Vagina (tissue), 2 donors: ENCODE measurements at regions of chr4 and their contacts with region 1.

Region 1: DNA sequence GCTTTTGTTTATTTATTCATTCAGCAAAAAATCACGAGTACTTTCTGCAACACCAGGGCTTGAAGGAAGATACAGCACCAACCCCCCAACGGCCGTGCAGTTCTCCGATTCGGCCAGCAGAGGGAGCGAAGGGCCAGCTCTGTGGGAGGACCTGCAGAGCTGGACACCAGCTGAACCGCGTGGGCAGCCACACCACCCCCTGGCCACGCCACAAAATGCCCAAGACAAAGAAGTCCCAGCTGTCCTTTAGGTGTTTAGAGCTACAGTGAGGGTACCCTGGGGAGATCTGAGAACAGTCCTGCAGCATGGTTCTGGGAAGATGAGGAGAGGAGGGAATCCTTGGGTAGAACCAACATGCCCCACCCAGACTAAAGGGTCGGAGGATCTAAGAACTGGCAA is 83.1 kb downstream of the RELL1 start:
- DNase-seq: no peak
- H3K4me3 ChIP-seq: no peak overlapping the region
- H3K27ac ChIP-seq: no peak overlapping the region
- H3K4me1 ChIP-seq: peaks cover 4% of the 10 kb centered on the region
- H3K27me3 ChIP-seq: no peaks in the 10 kb centered on the region
- CTCF ChIP-seq: peak; percentile 96 to 98 (median 97)
- POLR2A ChIP-seq: no peak

Region 2: GRCh38 chr4:37793562-37793961 is 190.5 kb after region 1 on chr4:
- intact Hi-C with region 1: loop called (anchors 5 kb)
- DNase-seq: no peak
- H3K4me3 ChIP-seq: no peak overlapping the region
- H3K27ac ChIP-seq: no peak overlapping the region
- H3K4me1 ChIP-seq: no peaks in the 10 kb centered on the region
- H3K27me3 ChIP-seq: no peaks in the 10 kb centered on the region
- CTCF ChIP-seq: peak in 1 of 3 experiments; percentile 40
- POLR2A ChIP-seq: no peak